ENCODE measurements at regions of chr18 and their contacts with region 1.

Region 1: DNA sequence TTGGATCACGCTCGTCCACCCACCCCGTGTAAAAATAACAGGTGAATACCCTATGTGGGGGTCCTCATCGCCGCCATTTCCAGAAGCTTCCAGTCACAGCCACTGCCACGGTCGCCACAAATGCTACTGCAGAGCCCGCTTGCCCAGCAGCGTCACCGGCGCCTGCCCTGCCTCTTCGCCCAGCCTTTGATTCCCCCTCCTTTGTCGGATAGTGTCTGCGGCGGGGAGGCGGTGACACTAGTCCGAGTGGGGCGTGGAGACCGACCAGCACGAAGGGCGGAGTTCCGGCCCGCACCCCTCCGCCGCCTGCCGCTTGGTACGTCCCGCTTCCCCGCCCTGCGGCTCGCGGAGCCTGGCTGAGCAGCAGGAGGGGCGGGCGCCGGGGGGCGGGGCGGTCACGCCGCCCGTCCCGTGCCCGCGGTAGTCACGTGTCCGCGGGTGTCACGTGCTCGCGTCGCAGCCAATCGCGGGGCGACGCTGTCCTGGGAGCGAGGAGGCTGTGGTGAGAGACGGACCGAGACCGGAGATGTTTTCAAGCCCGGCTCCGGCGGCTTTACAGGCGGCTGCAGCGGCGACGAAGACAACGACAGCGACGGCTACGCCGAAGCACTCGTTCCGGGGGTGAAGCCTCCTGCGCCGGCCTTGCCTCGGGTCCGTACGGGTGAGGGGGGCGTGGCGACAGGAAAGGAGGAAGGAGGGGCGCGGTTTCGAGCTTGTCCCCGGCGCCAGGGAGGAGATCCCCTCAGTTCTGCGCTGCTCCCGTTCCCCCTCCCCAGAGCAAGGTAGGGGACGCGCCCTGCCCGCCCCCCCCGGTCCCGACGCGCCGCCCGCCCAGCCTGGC is at the start of gene ANKRD12:
- DNase-seq: peak; percentile 98
- H3K4me3 Mint-ChIP-seq: peak within 1 kb of the TSS; percentile 95
- H3K27ac Mint-ChIP-seq: peak within 1 kb of the TSS; percentile 99
- H3K4me1 Mint-ChIP-seq: peaks cover 54% of the 10 kb centered on the region
- H3K27me3 Mint-ChIP-seq: no peaks in the 10 kb centered on the region
- total RNA-seq, gene ANKRD12: 66.0 and 68.7 TPM in 2 replicates

Region 2: DNA sequence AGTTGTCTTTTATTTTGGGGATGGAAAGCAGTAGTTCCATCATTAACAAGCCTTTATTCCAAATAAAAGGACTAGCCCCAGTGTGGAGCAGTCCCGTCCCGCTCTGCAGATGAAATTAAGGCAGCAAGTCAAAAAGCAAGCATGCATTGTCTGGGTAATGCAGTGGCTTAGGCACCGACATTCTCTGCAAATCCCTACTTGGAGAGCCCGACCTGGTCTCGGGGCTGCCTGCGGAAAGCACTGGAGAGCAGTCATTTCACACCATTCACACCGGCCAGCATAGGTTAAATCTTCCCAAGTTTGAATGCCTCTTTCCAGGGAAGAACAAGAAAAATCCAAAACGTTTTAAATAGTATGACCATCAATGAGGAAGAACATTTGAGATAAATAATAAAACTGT is 551.7 kb before region 1 on chr18:
- intact Hi-C with region 1: no loop called
- DNase-seq: no peak
- H3K4me3 Mint-ChIP-seq: no peak overlapping the region
- H3K27ac Mint-ChIP-seq: no peak overlapping the region
- H3K4me1 Mint-ChIP-seq: no peaks in the 10 kb centered on the region
- H3K27me3 Mint-ChIP-seq: peaks cover 7% of the 10 kb centered on the region

Region 3: GRCh38 chr18:9048808-9049494 is 87.6 kb before region 1 on chr18:
- intact Hi-C with region 1: no loop called
- DNase-seq: no peak
- H3K4me3 Mint-ChIP-seq: no peak overlapping the region
- H3K27ac Mint-ChIP-seq: no peak overlapping the region
- H3K4me1 Mint-ChIP-seq: peaks cover 15% of the 10 kb centered on the region
- H3K27me3 Mint-ChIP-seq: peaks cover 2% of the 10 kb centered on the region

Region 4: GRCh38 chr18:9082711-9083510 is 53.6 kb before region 1 on chr18:
- intact Hi-C with region 1: loop called (anchors 1 kb)
- DNase-seq: peak; percentile 49
- H3K4me3 Mint-ChIP-seq: peak overlapping the region; percentile 72
- H3K27ac Mint-ChIP-seq: peak overlapping the region; percentile 99
- H3K4me1 Mint-ChIP-seq: peaks cover 50% of the 10 kb centered on the region
- H3K27me3 Mint-ChIP-seq: no peaks in the 10 kb centered on the region

Region 5: DNA sequence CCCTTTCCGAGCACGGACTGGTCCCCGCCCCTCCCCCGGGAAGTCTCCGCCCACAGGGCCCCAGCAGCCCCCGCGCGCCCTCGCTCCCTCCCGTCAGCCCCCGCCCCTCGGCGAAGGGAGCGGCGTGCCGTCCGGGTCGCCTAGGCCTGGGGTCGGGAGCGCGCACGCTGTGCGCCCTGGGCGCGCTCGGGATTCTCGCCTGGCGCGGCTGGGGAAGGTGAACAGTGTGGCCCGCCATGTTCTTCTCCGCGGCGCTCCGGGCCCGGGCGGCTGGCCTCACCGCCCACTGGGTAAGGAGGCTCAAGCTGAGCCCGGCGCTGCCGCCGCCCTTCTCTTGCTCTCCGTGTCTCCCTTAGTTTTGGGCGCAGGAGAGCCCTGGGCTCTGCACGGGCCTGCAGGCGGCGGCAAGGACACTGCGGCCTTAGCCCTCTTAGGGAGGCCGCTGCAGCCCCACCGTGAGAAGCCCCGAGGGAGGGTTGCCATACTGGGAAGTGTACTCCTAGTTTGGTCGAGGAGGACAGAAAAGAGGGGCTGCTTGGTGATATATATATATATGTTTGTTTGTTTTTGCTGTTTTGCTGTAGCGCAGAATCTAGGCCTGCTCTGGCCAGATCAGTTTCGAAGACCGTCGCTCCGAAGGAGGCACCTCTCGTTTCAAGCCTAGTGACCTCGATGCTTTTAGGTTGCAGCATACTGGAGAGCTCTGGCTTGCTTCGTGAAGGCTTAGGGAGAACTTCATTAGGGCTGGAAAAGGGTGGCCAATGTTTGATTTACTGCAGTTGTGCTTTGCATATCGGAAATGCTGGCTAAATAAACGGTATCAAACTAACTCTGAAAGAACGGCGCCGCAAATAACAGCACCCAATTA is 33.8 kb before region 1 on chr18 and contains the start of gene NDUFV2:
- intact Hi-C with region 1: loop called (anchors 1 kb)
- DNase-seq: peak; percentile 97
- H3K4me3 Mint-ChIP-seq: peak within 1 kb of the TSS; percentile 92
- H3K27ac Mint-ChIP-seq: peak within 1 kb of the TSS; percentile 97
- H3K4me1 Mint-ChIP-seq: peaks cover 57% of the 10 kb centered on the region
- H3K27me3 Mint-ChIP-seq: no peaks in the 10 kb centered on the region
- total RNA-seq, gene NDUFV2: 329 and 341 TPM in 2 replicates

Region 6: DNA sequence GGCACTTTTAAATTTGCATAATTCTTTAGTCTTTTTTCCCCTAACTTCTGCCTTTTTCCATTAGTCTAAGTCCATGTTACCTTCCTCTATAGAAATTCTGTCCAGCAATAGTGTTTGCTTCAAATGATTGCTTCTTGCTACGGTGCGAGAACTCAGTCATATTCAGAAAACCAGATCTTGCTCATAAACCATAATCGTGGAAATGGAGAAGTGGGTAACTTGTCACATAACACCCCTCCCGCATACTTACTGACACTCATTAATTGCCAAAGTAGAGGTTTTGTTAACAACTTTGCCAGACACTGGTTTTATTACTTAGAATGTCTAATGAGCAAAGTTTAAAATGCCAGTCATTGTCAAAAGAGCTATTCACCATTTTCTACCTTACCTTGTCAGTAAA is 103.7 kb after region 1 on chr18:
- intact Hi-C with region 1: loop called (anchors 5 kb)
- DNase-seq: no peak
- H3K4me3 Mint-ChIP-seq: no peak overlapping the region
- H3K27ac Mint-ChIP-seq: no peak overlapping the region
- H3K4me1 Mint-ChIP-seq: peaks cover 7% of the 10 kb centered on the region
- H3K27me3 Mint-ChIP-seq: no peaks in the 10 kb centered on the region

Region 7: DNA sequence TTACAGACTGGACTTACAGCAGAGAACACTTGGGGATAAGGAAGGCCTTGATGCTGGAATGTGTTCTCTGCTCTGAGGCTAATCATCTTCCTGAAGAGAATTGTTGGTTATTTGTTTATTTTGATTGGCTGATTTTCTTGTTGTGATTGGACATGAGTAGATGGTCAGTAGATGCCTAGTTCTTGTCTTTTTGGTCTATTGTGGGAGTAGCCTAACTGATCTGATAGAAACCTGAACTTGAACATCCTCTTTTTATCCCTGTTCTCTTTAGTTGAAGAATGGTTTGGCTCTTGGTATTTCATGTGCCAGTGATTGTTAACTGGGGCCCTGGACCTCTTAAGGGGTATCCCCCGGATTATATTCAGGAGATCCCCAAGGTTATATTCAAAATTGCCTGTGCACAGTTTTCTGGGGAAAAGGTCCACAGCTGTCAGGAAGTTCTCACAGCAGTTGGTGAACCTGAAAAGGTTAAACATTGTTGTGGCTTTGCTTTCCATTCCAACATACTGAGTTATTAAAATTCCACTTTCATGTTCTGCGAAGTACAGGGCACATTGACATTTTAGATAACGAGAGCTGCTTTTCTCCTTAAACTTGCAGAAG is 211.6 kb after region 1 on chr18:
- intact Hi-C with region 1: no loop called
- DNase-seq: no peak
- H3K4me3 Mint-ChIP-seq: no peak overlapping the region
- H3K27ac Mint-ChIP-seq: no peak overlapping the region
- H3K4me1 Mint-ChIP-seq: peaks cover 3% of the 10 kb centered on the region
- H3K27me3 Mint-ChIP-seq: no peaks in the 10 kb centered on the region